GM12878 (cell line): ENCODE measurements at regions of chr5 and their contacts with region 1.

Region 1: DNA sequence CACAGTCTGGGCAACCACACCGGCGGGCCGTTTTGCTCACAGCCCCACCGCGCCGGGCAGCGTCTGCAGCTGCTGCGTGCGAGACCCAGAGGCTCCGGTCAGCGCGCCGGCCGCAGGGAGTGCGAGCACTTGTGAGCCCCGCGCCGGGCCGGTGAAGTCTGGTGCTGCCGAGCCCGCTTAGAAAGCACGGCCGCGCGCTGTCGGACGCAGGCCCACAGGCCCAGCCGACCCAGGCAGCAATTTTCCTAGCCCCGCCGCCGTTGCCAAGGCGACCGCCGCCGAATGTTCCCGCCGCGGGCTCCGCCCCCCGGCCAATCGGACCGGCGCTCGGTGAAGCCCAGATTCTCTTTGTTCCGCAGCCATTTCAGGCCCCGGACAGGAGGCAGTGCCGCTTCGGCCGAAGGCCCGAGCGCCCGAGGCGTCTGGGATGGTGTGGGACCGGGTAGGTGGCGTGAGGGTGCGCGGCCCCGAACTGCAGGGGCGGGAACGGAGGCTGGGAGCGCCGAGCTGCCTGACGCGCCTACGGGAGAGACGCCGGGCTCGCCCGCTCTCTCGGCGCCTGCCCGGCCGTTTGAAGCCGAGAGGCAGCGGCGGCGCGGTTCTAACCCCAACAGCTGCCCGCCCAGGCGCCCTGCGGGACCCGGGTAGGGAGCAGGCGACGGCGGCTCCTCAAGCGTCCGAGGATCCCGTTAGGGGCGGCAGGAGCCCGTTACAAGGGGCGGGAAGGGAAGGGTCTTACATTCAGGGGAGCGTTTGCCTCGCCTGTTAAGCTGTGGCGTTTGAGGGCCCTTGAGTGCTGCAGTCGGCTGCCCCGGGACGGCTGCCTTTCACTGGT is at the start of gene TNPO1:
- DNase-seq: peak; percentile 45
- ATAC-seq: peak; percentile 93
- H3K4me3 ChIP-seq: peak within 1 kb of the TSS; percentile 64
- H3K27ac ChIP-seq: peak within 1 kb of the TSS; percentile 91
- H3K4me1 ChIP-seq: 0 out of 2 replicates have a peak, but pooled peaks cover 2% of the 10 kb centered on the region
- H3K27me3 ChIP-seq: no peaks in the 10 kb centered on the region
- CTCF ChIP-seq: no peak
- EP300 ChIP-seq: no peak
- POLR2A ChIP-seq: peak; percentile 91
- RAD21 ChIP-seq: no peak
- polyA plus RNA-seq, gene TNPO1: 18.1 to 37.3 TPM

Region 2: DNA sequence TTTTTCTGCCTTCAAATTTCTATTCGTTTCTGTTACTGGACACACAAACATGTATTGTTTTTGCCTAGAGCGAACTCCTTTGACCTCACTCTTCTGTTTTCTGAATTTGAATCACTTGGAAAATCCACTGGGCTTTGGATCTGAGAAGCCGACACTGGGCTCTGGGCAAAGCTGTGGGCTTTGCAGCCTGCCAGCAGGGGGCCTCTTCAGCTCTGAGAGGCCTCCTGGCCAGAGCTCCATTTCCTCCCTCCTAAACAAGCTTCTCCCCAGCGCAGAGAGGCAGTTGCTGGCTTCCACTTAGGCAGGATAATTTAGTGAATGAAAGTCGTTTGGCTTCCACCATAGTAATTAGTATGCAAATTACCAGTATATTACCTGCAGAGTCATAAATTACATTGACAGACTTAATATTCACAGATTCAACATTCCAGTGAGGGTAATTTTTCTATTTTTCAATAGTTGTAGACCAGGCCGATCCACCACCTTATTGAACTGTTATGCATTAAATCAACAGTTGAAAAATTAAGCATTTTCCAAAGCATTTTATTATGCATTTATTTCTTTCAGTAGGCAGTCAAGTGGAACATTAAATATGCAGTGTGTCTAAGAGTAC is 205.3 kb before region 1 on chr5:
- CTCF ChIA-PET with region 1: interaction called, 194 read pairs
- POLR2A ChIA-PET with region 1: interaction called, 9 read pairs
- RAD21 ChIA-PET with region 1: interaction called, 98 read pairs
- SMC1A ChIA-PET with region 1: interaction called, 78 read pairs
- in situ Hi-C with region 1: loop called (anchors 5 kb)
- intact Hi-C with region 1: loop called (anchors 2 kb)
- DNase-seq: no peak
- ATAC-seq: peak; percentile 99
- H3K4me3 ChIP-seq: no peak overlapping the region
- H3K27ac ChIP-seq: no peak overlapping the region
- H3K4me1 ChIP-seq: no peaks in the 10 kb centered on the region
- H3K27me3 ChIP-seq: no peaks in the 10 kb centered on the region
- CTCF ChIP-seq: peak; percentile 85 to 97 (median 94)
- EP300 ChIP-seq: no peak
- POLR2A ChIP-seq: no peak
- RAD21 ChIP-seq: peak; percentile 74

Region 3: GRCh38 chr5:72661405-72661804 is 155.1 kb before region 1 on chr5:
- CTCF ChIA-PET with region 1: no interaction called
- POLR2A ChIA-PET with region 1: no interaction called
- RAD21 ChIA-PET with region 1: no interaction called
- SMC1A ChIA-PET with region 1: no interaction called
- in situ Hi-C with region 1: no loop called
- intact Hi-C with region 1: no loop called
- DNase-seq: no peak
- ATAC-seq: no peak
- H3K4me3 ChIP-seq: no peak overlapping the region
- H3K27ac ChIP-seq: no peak overlapping the region
- H3K4me1 ChIP-seq: no peaks in the 10 kb centered on the region
- H3K27me3 ChIP-seq: peaks cover 0 to 2% of the 10 kb centered on the region in 2 experiments; a peak in 3 of 4 replicates
- CTCF ChIP-seq: no peak
- EP300 ChIP-seq: no peak
- POLR2A ChIP-seq: no peak
- RAD21 ChIP-seq: no peak

Region 4: GRCh38 chr5:72693546-72694205 is 122.9 kb before region 1 on chr5:
- CTCF ChIA-PET with region 1: no interaction called
- POLR2A ChIA-PET with region 1: no interaction called
- RAD21 ChIA-PET with region 1: no interaction called
- SMC1A ChIA-PET with region 1: no interaction called
- in situ Hi-C with region 1: no loop called
- intact Hi-C with region 1: no loop called
- DNase-seq: no peak
- ATAC-seq: no peak
- H3K4me3 ChIP-seq: no peak overlapping the region
- H3K27ac ChIP-seq: no peak overlapping the region
- H3K4me1 ChIP-seq: no peaks in the 10 kb centered on the region
- H3K27me3 ChIP-seq: no peaks in the 10 kb centered on the region; a peak in 1 of 4 replicates
- CTCF ChIP-seq: no peak
- EP300 ChIP-seq: no peak
- POLR2A ChIP-seq: no peak
- RAD21 ChIP-seq: no peak

Region 5: DNA sequence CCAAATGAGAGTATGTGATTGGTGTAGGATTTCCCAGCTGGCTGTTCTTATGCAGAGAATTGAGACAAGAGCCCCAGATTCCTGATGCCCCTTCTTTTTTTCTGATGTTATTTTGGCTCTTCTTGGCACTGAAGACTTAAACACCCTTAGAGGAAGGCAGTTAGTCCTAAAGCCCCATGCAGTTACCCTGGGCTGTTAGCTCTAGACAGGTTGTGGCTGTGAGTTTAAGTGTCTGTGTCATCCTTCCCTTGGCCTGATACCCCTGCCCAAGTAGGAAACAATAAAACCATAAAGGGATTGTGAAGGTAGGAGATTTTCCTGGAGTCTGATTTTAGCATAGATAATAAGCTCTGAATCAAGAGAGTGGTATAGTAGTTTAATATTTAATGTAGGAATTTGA is 13.2 kb after region 1 on chr5:
- CTCF ChIA-PET with region 1: interaction called, 30 read pairs
- POLR2A ChIA-PET with region 1: interaction called, 3 read pairs
- RAD21 ChIA-PET with region 1: interaction called, 11 read pairs
- SMC1A ChIA-PET with region 1: interaction called, 44 read pairs
- in situ Hi-C with region 1: no loop called
- intact Hi-C with region 1: no loop called
- DNase-seq: no peak
- ATAC-seq: no peak; the same call in 2 of the 3 replicates
- H3K4me3 ChIP-seq: no peak overlapping the region
- H3K27ac ChIP-seq: no peak overlapping the region
- H3K4me1 ChIP-seq: no peaks in the 10 kb centered on the region
- H3K27me3 ChIP-seq: no peaks in the 10 kb centered on the region
- CTCF ChIP-seq: no peak
- EP300 ChIP-seq: no peak
- POLR2A ChIP-seq: no peak
- RAD21 ChIP-seq: no peak

Region 6: GRCh38 chr5:72834924-72835323 is 18.4 kb after region 1 on chr5:
- CTCF ChIA-PET with region 1: interaction called, 30 read pairs
- POLR2A ChIA-PET with region 1: interaction called, 3 read pairs
- RAD21 ChIA-PET with region 1: interaction called, 11 read pairs
- SMC1A ChIA-PET with region 1: interaction called, 44 read pairs
- in situ Hi-C with region 1: no loop called
- intact Hi-C with region 1: no loop called
- DNase-seq: no peak
- ATAC-seq: no peak
- H3K4me3 ChIP-seq: no peak overlapping the region
- H3K27ac ChIP-seq: no peak overlapping the region
- H3K4me1 ChIP-seq: no peaks in the 10 kb centered on the region
- H3K27me3 ChIP-seq: no peaks in the 10 kb centered on the region
- CTCF ChIP-seq: no peak
- EP300 ChIP-seq: no peak
- POLR2A ChIP-seq: no peak
- RAD21 ChIP-seq: no peak

Region 7: GRCh38 chr5:72842816-72843215 is 26.3 kb after region 1 on chr5:
- CTCF ChIA-PET with region 1: interaction called, 8 read pairs
- POLR2A ChIA-PET with region 1: interaction called, 4 read pairs
- RAD21 ChIA-PET with region 1: interaction called, 9 read pairs
- SMC1A ChIA-PET with region 1: interaction called, 14 read pairs
- in situ Hi-C with region 1: no loop called
- intact Hi-C with region 1: loop called (anchors 1 kb)
- DNase-seq: no peak
- ATAC-seq: peak; percentile 55; the same call in 2 of the 3 replicates
- H3K4me3 ChIP-seq: no peak overlapping the region
- H3K27ac ChIP-seq: no peak overlapping the region
- H3K4me1 ChIP-seq: peaks cover 6% of the 10 kb centered on the region; the same call in 1 of the 2 replicates
- H3K27me3 ChIP-seq: no peaks in the 10 kb centered on the region
- CTCF ChIP-seq: peak in 1 of 3 experiments; percentile 21; a peak in 3 of 6 replicates
- EP300 ChIP-seq: no peak
- POLR2A ChIP-seq: no peak
- RAD21 ChIP-seq: peak; percentile 37

Region 8: DNA sequence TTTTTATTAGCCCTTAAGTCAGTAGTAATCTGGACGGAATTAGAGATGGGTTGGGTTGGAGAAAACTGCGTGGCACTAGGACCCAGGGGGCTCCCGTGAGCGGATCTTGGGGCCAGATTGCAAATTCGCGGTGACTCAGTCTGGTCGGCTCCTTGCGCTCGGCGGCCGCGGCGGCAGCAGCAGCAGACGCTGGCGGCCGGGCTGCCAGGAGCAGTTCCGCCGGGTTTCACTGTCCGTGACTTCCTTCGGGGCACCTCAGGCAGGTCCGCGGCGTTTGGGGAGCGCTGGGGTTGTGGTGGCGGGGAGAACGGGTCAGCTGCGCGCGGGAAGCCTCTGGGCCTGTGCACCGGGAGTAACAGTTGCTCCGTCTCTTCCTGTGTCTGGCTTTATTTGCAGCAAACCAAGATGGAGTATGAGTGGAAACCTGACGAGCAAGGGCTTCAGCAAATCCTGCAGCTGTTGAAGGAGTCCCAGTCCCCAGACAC is 31.5 kb after region 1 on chr5:
- CTCF ChIA-PET with region 1: interaction called, 27 read pairs
- POLR2A ChIA-PET with region 1: interaction called, 18 read pairs
- RAD21 ChIA-PET with region 1: interaction called, 21 read pairs
- SMC1A ChIA-PET with region 1: interaction called, 25 read pairs
- in situ Hi-C with region 1: no loop called
- intact Hi-C with region 1: loop called (anchors 1 kb)
- DNase-seq: peak; percentile 40
- ATAC-seq: peak; percentile 89
- H3K4me3 ChIP-seq: peak overlapping the region; percentile 71
- H3K27ac ChIP-seq: peak overlapping the region; percentile 67
- H3K4me1 ChIP-seq: peaks cover 6% of the 10 kb centered on the region; the same call in 1 of the 2 replicates
- H3K27me3 ChIP-seq: no peaks in the 10 kb centered on the region
- CTCF ChIP-seq: no peak
- EP300 ChIP-seq: peak in 1 of 2 experiments; percentile 56; a peak in 2 of 4 replicates
- POLR2A ChIP-seq: peak; percentile 98
- RAD21 ChIP-seq: no peak

Region 9: GRCh38 chr5:72854419-72854818 is 37.9 kb after region 1 on chr5:
- CTCF ChIA-PET with region 1: interaction called, 27 read pairs
- POLR2A ChIA-PET with region 1: interaction called, 18 read pairs
- RAD21 ChIA-PET with region 1: interaction called, 21 read pairs
- SMC1A ChIA-PET with region 1: interaction called, 25 read pairs
- in situ Hi-C with region 1: no loop called
- intact Hi-C with region 1: no loop called
- DNase-seq: no peak
- ATAC-seq: no peak
- H3K4me3 ChIP-seq: no peak overlapping the region
- H3K27ac ChIP-seq: no peak overlapping the region
- H3K4me1 ChIP-seq: no peaks in the 10 kb centered on the region
- H3K27me3 ChIP-seq: no peaks in the 10 kb centered on the region
- CTCF ChIP-seq: no peak
- EP300 ChIP-seq: no peak
- POLR2A ChIP-seq: no peak
- RAD21 ChIP-seq: no peak

Region 10: DNA sequence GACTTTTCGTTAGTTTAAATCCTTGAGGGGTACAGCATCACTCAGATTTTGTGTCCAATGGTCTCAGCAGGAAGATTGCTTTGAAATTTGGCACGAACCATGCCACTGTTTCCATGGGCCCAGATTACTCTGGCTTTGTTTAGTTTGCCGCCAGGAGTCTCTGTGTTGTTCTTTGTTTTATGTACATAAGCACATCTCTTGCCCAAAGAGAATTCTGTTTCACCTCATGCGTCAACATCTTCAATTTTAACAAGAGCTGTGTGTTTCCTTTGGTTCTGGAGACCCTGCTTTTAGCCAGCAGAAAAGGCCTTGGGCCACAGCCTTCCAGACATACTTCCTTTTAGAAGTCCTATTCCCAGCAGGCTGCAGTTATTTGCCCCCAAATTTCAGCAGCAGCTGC is 62.3 kb after region 1 on chr5:
- CTCF ChIA-PET with region 1: no interaction called
- POLR2A ChIA-PET with region 1: no interaction called
- RAD21 ChIA-PET with region 1: no interaction called
- SMC1A ChIA-PET with region 1: no interaction called
- in situ Hi-C with region 1: no loop called
- intact Hi-C with region 1: no loop called
- DNase-seq: no peak
- ATAC-seq: no peak
- H3K4me3 ChIP-seq: no peak overlapping the region
- H3K27ac ChIP-seq: no peak overlapping the region
- H3K4me1 ChIP-seq: no peaks in the 10 kb centered on the region
- H3K27me3 ChIP-seq: no peaks in the 10 kb centered on the region
- CTCF ChIP-seq: no peak
- EP300 ChIP-seq: no peak
- POLR2A ChIP-seq: no peak
- RAD21 ChIP-seq: no peak

Region 11: GRCh38 chr5:72938206-72938605 is 121.7 kb after region 1 on chr5:
- CTCF ChIA-PET with region 1: no interaction called
- POLR2A ChIA-PET with region 1: no interaction called
- RAD21 ChIA-PET with region 1: no interaction called
- SMC1A ChIA-PET with region 1: no interaction called
- in situ Hi-C with region 1: no loop called
- intact Hi-C with region 1: no loop called
- DNase-seq: no peak
- ATAC-seq: no peak
- H3K4me3 ChIP-seq: no peak overlapping the region
- H3K27ac ChIP-seq: no peak overlapping the region
- H3K4me1 ChIP-seq: no peaks in the 10 kb centered on the region
- H3K27me3 ChIP-seq: no peaks in the 10 kb centered on the region
- CTCF ChIP-seq: no peak
- EP300 ChIP-seq: no peak
- POLR2A ChIP-seq: no peak
- RAD21 ChIP-seq: no peak